Activated T-helper 2 cell treated with anti-CD3 and anti-CD28 coated beads, Interferon-gamma antibody, Interleukin-2, Interleukin-4, amounts not matched to agents 10 μg/mL and 5 μg/mL and 100 μg/mL, durations not matched to agents 14 hours and 24 hours and 36 hours (primary cell): ENCODE measurements at regions of chr2 and their contacts with region 1.

Region 1: DNA sequence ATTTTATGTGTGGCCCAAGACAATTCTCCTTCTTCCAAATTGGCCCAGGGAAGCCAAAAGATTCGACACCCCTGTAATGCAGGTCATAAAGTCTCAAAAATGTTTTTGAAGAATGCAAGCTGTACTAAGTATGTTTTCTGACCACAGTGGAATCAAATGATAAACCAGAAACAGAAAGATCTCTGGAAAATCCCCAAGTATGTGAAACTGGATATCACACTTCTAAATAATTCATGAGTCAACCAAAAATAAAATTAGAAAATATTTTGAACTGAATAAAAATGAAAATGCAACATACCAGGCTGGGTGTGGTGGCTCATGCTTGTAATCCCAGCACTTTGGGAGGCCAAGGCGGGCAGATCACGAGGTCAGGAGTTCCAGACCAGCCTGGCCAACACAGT is 34.1 kb upstream of the UBE2F start:
- DNase-seq: no peak
- H3K4me3 Mint-ChIP-seq: no peak overlapping the region
- H3K27ac Mint-ChIP-seq: peak overlapping the region; percentile 39
- H3K4me1 Mint-ChIP-seq: peaks cover 11% of the 10 kb centered on the region
- H3K27me3 Mint-ChIP-seq: no peaks in the 10 kb centered on the region

Region 2: GRCh38 chr2:237904801-237905599 is 27.7 kb before region 1 on chr2:
- intact Hi-C with region 1: loop called (anchors 2 kb)
- DNase-seq: no peak
- H3K4me3 Mint-ChIP-seq: no peak overlapping the region
- H3K27ac Mint-ChIP-seq: peak overlapping the region; percentile 90
- H3K4me1 Mint-ChIP-seq: peaks cover 31% of the 10 kb centered on the region
- H3K27me3 Mint-ChIP-seq: no peaks in the 10 kb centered on the region